Right ventricle myocardium superior (tissue), 1 donor: ENCODE measurements at regions of chr6 and their contacts with region 1.

Region 1: GRCh38 chr6:125153391-125154117 is at the start of gene TPD52L1:
- DNase-seq: peak; percentile 88
- ATAC-seq: peak; percentile 96
- total RNA-seq, gene TPD52L1: 43.5 TPM

Region 2: GRCh38 chr6:125114248-125114858 is 39.2 kb before region 1 on chr6:
- intact Hi-C with region 1: no loop called
- DNase-seq: no peak
- ATAC-seq: peak; percentile 53

Region 3: GRCh38 chr6:125220712-125221111 is 67.2 kb after region 1 on chr6:
- intact Hi-C with region 1: loop called (anchors 10 kb)
- DNase-seq: peak; percentile 58
- ATAC-seq: peak; percentile 85

Region 4: GRCh38 chr6:125236536-125237327 is 83.2 kb after region 1 on chr6:
- intact Hi-C with region 1: no loop called
- DNase-seq: no peak
- ATAC-seq: no peak

Region 5: DNA sequence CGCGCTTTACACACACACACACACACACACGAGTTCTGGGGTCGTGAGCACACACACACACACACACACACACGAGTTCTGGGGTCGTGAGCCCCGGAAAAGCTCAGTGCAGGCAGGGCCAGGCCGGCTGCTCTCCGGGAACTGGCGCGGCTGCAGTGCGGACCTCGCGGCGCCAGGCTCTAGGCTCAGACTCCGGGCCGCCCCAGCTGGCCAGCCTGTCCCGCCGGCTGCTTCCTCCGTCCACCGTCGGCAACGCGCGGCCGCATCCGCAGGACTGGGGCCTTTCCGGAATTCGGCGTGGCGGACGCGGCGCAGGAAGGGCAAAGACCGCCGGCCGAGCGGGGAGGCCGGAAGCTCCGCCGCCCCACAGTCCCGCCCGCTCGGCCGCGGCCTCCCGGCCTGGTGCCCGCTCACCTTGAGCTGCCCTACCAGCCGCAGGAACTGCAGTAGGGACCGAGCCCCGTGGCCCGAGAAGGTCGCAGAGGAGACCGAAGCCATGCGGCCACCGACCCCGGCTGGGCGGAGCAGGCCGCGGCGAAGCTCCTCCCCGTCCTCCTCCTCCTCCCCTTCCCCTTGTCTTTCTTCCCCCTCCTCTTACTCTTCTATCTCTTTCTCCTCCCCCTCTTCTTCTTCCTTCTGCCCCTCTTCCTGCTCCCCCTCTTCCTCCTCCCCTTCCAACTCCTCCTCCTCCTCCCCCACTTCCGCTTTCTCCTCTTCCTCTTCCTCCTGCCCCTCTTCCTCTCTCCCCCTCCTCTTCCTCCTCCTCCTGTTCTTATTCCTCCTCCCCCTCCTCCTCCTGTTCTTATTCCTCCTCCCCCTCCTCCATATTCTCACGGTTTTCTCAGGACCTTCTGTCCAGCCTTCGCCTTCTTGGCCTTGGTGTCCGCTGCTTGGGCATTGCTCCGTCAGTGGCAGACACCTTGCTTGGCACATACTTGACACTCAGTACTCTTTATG is 148.2 kb after region 1 on chr6 and contains the start of gene HDDC2:
- intact Hi-C with region 1: loop called (anchors 5 kb)
- DNase-seq: peak; percentile 88
- ATAC-seq: peak; percentile 92
- total RNA-seq, gene HDDC2: 84.8 TPM

Region 6: GRCh38 chr6:125779924-125780539 is 626.5 kb after region 1 on chr6:
- intact Hi-C with region 1: loop called (anchors 10 kb)
- DNase-seq: peak; percentile 87
- ATAC-seq: peak; percentile 97